ENCODE measurements at regions of chr6 and their contacts with region 1.

Region 1: GRCh38 chr6:107957909-107958688 is at the start of gene SEC63:
- H3K4me3 ChIP-seq: peak within 1 kb of the TSS; percentile 59
- H3K27ac ChIP-seq: peak within 1 kb of the TSS; percentile 88
- H3K4me1 ChIP-seq: no peaks in the 10 kb centered on the region; the same call in 1 of the 2 replicates
- CTCF ChIP-seq: peak; percentile 71

Region 2: DNA sequence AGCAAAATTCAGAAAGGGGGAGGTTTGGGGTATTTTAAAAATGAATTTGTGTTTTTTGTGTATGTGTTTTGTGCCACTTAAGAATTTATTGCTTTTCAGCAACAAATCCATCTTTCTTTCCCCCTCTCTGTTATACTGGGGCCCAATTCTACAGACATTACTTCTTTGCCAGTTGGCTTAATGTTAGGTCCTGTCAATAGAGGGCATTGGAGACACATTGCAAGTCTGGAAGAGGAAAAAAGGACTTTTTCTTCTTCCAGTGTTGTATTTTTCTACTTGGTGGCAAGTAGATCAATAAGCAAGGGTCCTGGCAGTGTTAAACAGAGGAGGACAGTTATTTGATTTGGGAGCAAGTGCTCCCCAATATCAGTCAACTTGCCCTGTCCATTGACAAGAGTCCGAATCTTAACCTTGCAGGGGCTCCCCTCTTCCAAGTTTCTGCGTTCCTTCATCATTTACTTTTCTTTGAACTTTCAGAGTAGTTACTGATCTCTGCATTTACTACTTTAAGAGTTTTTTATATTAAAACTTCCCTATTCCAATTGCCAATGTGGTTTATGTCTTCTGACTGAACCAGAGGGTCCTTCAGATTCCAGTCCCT is 157.4 kb before region 1 on chr6:
- CTCF ChIA-PET with region 1: no interaction called
- POLR2A ChIA-PET with region 1: interaction called, 10 read pairs
- H3K4me3 ChIP-seq: no peak overlapping the region
- H3K27ac ChIP-seq: no peak overlapping the region
- H3K4me1 ChIP-seq: no peaks in the 10 kb centered on the region
- CTCF ChIP-seq: peak; percentile 54; the same call in 1 of the 2 replicates

Region 3: GRCh38 chr6:107832151-107833056 is 125.7 kb before region 1 on chr6:
- CTCF ChIA-PET with region 1: no interaction called
- POLR2A ChIA-PET with region 1: no interaction called
- H3K4me3 ChIP-seq: no peak overlapping the region
- H3K27ac ChIP-seq: no peak overlapping the region
- H3K4me1 ChIP-seq: no peaks in the 10 kb centered on the region
- CTCF ChIP-seq: no peak

Region 4: DNA sequence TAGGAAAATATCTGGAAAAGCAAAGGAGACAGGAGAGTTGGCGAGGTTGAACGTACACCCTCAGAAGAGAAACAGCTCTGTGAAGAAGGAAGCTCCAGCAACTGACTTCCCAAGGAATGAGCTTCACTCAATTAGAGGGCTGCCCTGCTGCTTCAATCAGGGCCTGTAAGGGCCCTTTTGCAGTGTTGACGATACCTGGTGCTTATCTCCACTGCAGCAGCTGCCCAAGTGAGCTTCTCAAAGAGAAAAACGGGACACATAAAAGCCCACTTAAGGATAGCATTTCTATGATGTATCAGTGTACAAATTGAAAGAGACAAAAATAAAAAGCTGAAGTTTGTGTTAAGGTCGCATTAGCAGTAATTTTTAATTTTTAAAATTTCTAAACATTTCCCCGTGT is 16.5 kb before region 1 on chr6:
- CTCF ChIA-PET with region 1: no interaction called
- POLR2A ChIA-PET with region 1: interaction called, 13 read pairs
- H3K4me3 ChIP-seq: no peak overlapping the region
- H3K27ac ChIP-seq: no peak overlapping the region
- H3K4me1 ChIP-seq: peaks cover 5% of the 10 kb centered on the region
- CTCF ChIP-seq: no peak

Measured in HEK293 (cell line).